ENCODE measurements at regions of chr9 and their contacts with region 1.

Region 1: DNA sequence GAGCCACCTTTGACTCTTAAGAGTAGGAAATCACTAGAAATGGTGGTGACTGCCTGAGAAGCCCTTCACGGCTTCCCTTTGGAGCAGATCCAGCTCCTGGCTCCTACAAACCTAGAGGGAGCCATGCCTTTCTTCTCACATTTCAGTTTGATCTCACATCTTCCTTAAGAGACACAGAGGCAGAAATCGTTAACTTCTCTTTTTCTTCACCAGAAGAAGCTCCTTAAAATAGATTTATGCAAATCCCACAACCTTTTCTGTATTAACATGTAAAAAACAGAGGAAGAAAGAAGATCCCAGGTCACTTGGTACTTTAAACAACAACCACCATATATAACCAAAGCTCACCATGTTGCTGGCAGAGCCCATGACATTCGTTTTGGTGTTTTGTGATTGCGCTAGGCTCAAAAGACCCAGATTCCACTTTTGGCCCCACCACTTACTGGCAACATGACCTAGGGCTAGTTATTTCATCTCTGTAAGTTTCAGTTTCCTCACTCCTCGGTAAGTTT is 29.6 kb downstream of the PAX5 start:
- DNase-seq: no peak
- ATAC-seq: peak; percentile 37
- H3K4me3 Mint-ChIP-seq: peak overlapping the region; percentile 86
- H3K27ac Mint-ChIP-seq: peak overlapping the region; percentile 84
- H3K4me1 Mint-ChIP-seq: peaks cover 94% of the 10 kb centered on the region
- H3K27me3 Mint-ChIP-seq: no peaks in the 10 kb centered on the region
- CTCF ChIP-seq: no peak

Region 2: DNA sequence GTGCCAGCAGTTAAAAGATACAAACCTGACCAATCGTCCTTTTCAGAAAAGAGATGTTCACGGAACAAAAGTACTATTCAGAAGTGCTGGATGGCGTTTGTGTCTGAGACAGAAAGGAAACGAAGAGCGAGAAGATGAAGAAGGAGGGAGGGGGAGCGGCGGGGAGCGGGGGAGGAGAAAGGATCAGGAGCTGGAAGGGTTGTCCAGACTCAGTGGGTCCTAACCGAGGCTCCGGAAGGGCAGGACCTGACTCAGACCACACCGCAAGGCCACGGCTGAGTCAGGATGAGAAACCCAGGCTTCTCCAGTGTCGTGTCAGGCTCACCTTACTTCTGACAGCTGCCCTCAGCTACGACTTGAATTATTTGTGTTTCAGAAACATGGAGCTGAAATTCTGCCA is 16.6 kb before region 1 on chr9:
- CTCF ChIA-PET with region 1: interaction called, 6 read pairs
- POLR2A ChIA-PET with region 1: interaction called, 14 read pairs
- intact Hi-C with region 1: no loop called
- DNase-seq: no peak
- ATAC-seq: no peak
- H3K4me3 Mint-ChIP-seq: peak overlapping the region; percentile 71
- H3K27ac Mint-ChIP-seq: peak overlapping the region; percentile 82
- H3K4me1 Mint-ChIP-seq: peaks cover 90% of the 10 kb centered on the region
- H3K27me3 Mint-ChIP-seq: no peaks in the 10 kb centered on the region
- CTCF ChIP-seq: no peak

Region 3: DNA sequence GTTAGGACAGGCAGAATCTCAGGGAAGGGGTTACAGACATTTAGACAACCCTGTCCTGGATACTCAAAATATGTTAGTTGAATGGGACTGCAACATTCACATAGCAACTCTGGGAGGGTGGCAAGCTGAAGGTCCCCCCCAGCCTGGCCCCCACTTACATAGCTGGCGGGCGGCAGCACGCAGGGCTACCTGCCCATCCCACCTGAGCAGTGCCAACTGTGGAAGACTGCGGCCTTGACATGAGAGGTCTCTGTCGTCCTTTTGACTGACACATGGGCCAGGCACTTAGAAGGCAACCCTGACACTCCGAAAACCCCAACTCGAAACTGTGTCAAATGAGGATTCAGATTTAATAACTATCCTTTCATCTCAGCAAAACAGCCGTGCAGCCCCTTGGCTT is 13.1 kb after region 1 on chr9:
- CTCF ChIA-PET with region 1: interaction called, 6 read pairs
- POLR2A ChIA-PET with region 1: interaction called, 291 read pairs
- intact Hi-C with region 1: loop called (anchors 1 kb)
- DNase-seq: no peak
- ATAC-seq: no peak
- H3K4me3 Mint-ChIP-seq: no peak overlapping the region
- H3K27ac Mint-ChIP-seq: peak overlapping the region; percentile 65
- H3K4me1 Mint-ChIP-seq: peaks cover 90% of the 10 kb centered on the region
- H3K27me3 Mint-ChIP-seq: no peaks in the 10 kb centered on the region
- CTCF ChIP-seq: no peak

Measured in activated B cell treated with CpG ODN at 0.5 μM for 24 hours (primary cell).